Right ventricle myocardium inferior (tissue), 1 donor: ENCODE measurements at regions of chr3 and their contacts with region 1.

Region 1: DNA sequence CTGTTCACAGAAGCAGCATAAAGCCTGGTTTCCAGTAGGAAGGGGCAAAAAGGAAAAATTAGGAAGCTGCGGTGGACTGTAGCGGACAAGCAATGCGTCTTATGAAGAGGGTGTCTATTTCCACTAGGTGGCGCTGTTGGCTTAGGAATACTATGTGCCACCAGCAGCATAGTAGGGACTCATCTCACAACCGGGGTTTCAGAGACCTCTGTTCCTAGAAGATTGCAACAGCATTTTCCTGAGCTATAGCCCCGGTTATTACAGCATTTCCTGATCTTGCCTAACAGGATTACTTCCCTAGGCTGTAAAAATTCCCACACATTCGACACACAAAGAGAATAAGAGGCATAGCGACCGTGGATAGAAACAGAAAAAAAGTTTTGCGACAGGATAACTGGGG is 683.0 kb downstream of the TBL1XR1 start:
- DNase-seq: no peak
- ATAC-seq: no peak

Region 2: DNA sequence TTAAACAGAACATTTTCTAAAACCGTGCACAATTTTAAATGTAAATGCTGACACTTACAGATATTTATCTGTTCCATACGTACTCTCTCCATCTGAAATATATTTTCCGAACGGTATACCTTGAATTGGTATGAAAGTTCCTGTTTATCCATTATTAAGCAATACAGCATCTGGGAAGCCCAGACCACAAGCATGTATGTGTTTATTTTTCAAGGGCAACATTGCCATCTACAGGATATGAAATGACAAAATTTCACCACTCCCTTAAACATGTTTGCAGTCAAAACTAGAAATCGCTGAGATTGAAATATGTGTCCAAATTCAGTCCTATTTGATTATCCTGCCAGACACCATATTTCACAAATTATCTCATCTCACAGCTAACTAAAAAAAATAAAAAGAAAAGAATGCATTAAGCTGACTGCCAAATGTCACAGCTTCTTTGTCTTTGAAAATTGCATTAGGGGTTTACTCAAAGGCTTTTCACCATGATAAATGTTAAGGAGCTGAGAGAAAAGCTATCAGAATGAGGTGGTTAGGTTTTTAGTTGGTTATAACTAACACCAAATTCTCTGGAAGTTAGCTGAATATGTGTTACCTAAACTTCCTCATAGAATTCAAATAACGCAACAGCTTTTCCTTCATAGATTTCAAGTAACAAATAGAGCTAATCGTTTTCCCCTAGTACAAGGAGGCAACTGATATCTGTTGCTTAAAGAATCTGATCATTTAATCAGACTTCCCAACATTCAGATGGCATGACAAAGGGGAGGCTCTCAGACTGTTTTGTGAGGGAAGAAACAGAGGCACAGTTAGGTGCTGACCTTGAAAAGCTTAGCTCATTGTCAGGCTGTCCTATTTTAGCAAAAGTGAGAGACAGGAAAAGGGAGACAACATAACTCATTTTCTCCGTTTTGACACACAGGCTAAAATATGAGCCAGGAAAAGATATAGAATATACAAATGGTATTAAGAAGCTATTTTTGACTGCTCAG is 149.8 kb after region 1 on chr3:
- intact Hi-C with region 1: loop called (anchors 10 kb)
- DNase-seq: no peak
- ATAC-seq: peak; percentile 44

Region 3: DNA sequence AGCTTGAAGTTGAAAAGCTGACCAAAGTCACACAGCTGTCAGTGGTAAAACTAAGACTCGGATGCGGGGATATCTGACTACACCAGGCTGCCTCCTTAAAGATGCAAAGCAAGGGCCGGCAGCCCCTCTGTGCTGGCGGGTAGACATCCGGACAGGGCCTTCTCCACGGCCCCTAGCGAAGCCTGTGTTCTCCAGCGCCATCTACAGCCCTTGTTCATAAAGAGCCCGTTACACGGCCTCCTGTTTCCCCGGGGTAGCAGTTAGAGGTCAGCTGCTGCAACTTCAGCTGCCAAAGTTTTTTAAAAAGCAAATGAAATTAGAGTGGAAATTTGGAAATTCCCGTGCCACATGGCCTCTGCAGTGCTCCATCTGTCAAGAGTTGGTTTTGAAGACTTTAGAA is 300.0 kb after region 1 on chr3:
- intact Hi-C with region 1: loop called (anchors 10 kb)
- DNase-seq: peak; percentile 68
- ATAC-seq: peak; percentile 88

Region 4: GRCh38 chr3:176939022-176939817 is 424.9 kb after region 1 on chr3:
- intact Hi-C with region 1: loop called (anchors 2 kb)
- DNase-seq: no peak
- ATAC-seq: peak; percentile 78